ENCODE measurements at regions of chr12 and their contacts with region 1.

Region 1: GRCh38 chr12:92216092-92216491 is 70.4 kb upstream of the BTG1 start:
- DNase-seq: no peak
- H3K4me3 ChIP-seq: no peak overlapping the region
- H3K27ac ChIP-seq: no peak overlapping the region
- H3K4me1 ChIP-seq: no peaks in the 10 kb centered on the region
- H3K27me3 ChIP-seq: no peaks in the 10 kb centered on the region
- CTCF ChIP-seq: no peak

Region 2: DNA sequence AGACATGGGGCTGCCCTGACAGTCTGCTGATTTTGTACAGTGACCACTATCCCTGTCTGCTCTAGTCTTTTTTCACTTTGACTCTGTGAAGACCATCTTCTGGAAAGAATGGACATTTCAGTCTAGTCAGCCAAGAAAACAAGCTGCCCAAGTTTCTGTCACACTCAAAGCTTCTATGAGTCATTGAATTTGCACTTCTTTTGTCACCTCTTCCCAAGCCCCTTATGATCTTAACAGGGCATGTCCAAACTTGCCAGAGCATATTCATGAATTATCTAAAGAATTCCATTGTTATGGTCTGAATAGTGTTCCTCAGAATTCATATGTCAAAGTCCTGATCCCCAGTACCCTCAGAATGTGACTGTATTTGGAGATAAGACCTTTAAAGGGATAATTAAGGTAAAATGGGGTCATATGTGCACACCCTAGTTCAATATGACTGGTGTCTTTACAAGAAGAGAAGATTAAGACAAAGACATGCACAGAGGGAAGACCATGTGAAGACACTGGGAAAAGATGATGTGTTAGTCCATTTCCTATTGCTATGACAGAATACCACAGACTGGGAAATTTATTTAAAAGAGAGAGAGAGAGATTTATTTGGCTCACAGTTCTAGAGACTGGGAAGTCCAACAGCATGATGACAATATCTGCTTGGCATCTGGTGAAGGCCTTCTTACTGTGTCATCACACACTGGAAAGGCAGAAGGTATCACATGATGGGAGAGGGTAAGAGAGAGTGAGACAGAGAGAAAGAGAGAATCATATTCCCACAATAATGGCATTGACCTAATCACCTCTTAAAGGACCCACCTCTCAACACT is 313.0 kb before region 1 on chr12:
- CTCF ChIA-PET with region 1: no interaction called
- POLR2A ChIA-PET with region 1: interaction called, 30 read pairs
- intact Hi-C with region 1: no loop called
- DNase-seq: no peak
- H3K4me3 ChIP-seq: no peak overlapping the region
- H3K27ac ChIP-seq: no peak overlapping the region
- H3K4me1 ChIP-seq: no peaks in the 10 kb centered on the region
- H3K27me3 ChIP-seq: no peaks in the 10 kb centered on the region
- CTCF ChIP-seq: no peak

Region 3: GRCh38 chr12:92075425-92075914 is 140.6 kb before region 1 on chr12:
- CTCF ChIA-PET with region 1: no interaction called
- POLR2A ChIA-PET with region 1: no interaction called
- intact Hi-C with region 1: no loop called
- DNase-seq: no peak
- H3K4me3 ChIP-seq: no peak overlapping the region
- H3K27ac ChIP-seq: no peak overlapping the region
- H3K4me1 ChIP-seq: peaks cover 29% of the 10 kb centered on the region
- H3K27me3 ChIP-seq: no peaks in the 10 kb centered on the region
- CTCF ChIP-seq: no peak

Region 4: GRCh38 chr12:92431146-92431545 is 215.1 kb after region 1 on chr12:
- CTCF ChIA-PET with region 1: interaction called, 10 read pairs
- POLR2A ChIA-PET with region 1: no interaction called
- intact Hi-C with region 1: no loop called
- DNase-seq: no peak
- H3K4me3 ChIP-seq: no peak overlapping the region
- H3K27ac ChIP-seq: no peak overlapping the region
- H3K4me1 ChIP-seq: no peaks in the 10 kb centered on the region; the same call in 1 of the 2 replicates
- H3K27me3 ChIP-seq: no peaks in the 10 kb centered on the region
- CTCF ChIP-seq: no peak